ENCODE measurements at regions of chr1 and their contacts with region 1.

Region 1: DNA sequence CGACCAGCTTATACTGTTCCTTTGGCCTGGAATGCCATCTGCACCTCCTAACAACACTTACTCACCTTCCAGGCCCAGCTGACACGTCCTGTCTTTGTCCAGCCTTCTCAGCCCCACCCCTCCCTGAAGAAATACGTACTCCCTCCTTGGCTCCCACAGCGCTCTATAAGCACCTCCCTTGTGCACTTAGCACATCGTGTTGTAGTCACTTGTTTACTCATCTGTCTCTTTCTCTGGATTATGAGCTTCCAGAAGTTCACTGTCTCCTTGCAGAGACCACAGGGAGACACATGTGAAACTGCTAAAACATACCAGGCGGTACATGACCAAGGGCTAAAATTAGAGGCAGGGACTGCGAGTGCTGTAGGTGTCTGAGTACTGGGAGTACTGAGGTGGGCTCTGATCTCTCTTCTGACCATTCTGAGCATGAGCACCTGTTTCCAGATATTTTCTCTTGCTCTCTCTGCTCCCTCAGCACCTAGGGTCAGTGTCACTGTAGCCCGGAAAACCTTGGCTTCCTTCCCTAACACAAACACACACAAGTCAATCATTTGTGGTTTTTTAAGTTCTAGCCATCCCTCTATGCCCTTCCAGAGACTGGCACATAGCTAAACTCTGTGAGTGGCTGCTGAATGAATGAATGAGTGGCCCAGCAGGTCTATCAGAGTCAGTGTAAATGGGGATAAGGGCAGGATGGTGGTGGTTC is 5.1 kb downstream of the DCST1 start:
- DNase-seq: peak; percentile 97
- H3K4me3 Mint-ChIP-seq: peak overlapping the region; percentile 15
- H3K27ac Mint-ChIP-seq: peak overlapping the region; percentile 79
- H3K4me1 Mint-ChIP-seq: peaks cover 37% of the 10 kb centered on the region
- H3K27me3 Mint-ChIP-seq: no peaks in the 10 kb centered on the region
- CTCF ChIP-seq: no peak

Region 2: GRCh38 chr1:154955718-154956543 is 82.8 kb before region 1 on chr1 and contains the start of gene PBXIP1:
- CTCF ChIA-PET with region 1: interaction called, 12 read pairs
- POLR2A ChIA-PET with region 1: interaction called, 23 read pairs
- intact Hi-C with region 1: no loop called
- DNase-seq: peak; percentile 97
- H3K4me3 Mint-ChIP-seq: peak within 1 kb of the TSS; percentile 88
- H3K27ac Mint-ChIP-seq: peak within 1 kb of the TSS; percentile 68
- H3K4me1 Mint-ChIP-seq: peaks cover 43% of the 10 kb centered on the region
- H3K27me3 Mint-ChIP-seq: no peaks in the 10 kb centered on the region
- CTCF ChIP-seq: peak; percentile 24
- total RNA-seq, gene PBXIP1: 11.3 TPM in 2 replicates

Region 3: GRCh38 chr1:154982897-154983648 is 55.7 kb before region 1 on chr1 and contains the start of gene FLAD1:
- CTCF ChIA-PET with region 1: interaction called, 23 read pairs
- POLR2A ChIA-PET with region 1: interaction called, 22 read pairs
- intact Hi-C with region 1: no loop called
- DNase-seq: peak; percentile 100
- H3K4me3 Mint-ChIP-seq: no peak within 1 kb of the TSS
- H3K27ac Mint-ChIP-seq: no peak within 1 kb of the TSS
- H3K4me1 Mint-ChIP-seq: peaks cover 6% of the 10 kb centered on the region
- H3K27me3 Mint-ChIP-seq: no peaks in the 10 kb centered on the region
- CTCF ChIP-seq: no peak
- total RNA-seq, gene FLAD1: 65.4 and 91.1 TPM in 2 replicates

Region 4: GRCh38 chr1:155012026-155012546 is 26.7 kb before region 1 on chr1:
- CTCF ChIA-PET with region 1: interaction called, 390 read pairs
- POLR2A ChIA-PET with region 1: interaction called, 275 read pairs
- intact Hi-C with region 1: loop called (anchors 2 kb)
- DNase-seq: peak; percentile 95
- H3K4me3 Mint-ChIP-seq: peak overlapping the region; percentile 70
- H3K27ac Mint-ChIP-seq: peak overlapping the region; percentile 86
- H3K4me1 Mint-ChIP-seq: peaks cover 76% of the 10 kb centered on the region
- H3K27me3 Mint-ChIP-seq: no peaks in the 10 kb centered on the region
- CTCF ChIP-seq: no peak

Region 5: GRCh38 chr1:155022927-155023236 is 15.9 kb before region 1 on chr1:
- CTCF ChIA-PET with region 1: interaction called, 390 read pairs
- POLR2A ChIA-PET with region 1: interaction called, 275 read pairs
- intact Hi-C with region 1: no loop called
- DNase-seq: peak; percentile 85
- H3K4me3 Mint-ChIP-seq: peak overlapping the region; percentile 3
- H3K27ac Mint-ChIP-seq: peak overlapping the region; percentile 52
- H3K4me1 Mint-ChIP-seq: peaks cover 63% of the 10 kb centered on the region
- H3K27me3 Mint-ChIP-seq: no peaks in the 10 kb centered on the region
- CTCF ChIP-seq: no peak

Region 6: GRCh38 chr1:155135415-155136028 is 96.8 kb after region 1 on chr1 and contains the start of gene SLC50A1:
- CTCF ChIA-PET with region 1: no interaction called
- POLR2A ChIA-PET with region 1: interaction called, 12 read pairs
- intact Hi-C with region 1: no loop called
- DNase-seq: peak; percentile 94
- H3K4me3 Mint-ChIP-seq: peak within 1 kb of the TSS; percentile 80
- H3K27ac Mint-ChIP-seq: peak within 1 kb of the TSS; percentile 94
- H3K4me1 Mint-ChIP-seq: peaks cover 50% of the 10 kb centered on the region
- H3K27me3 Mint-ChIP-seq: no peaks in the 10 kb centered on the region
- CTCF ChIP-seq: no peak
- total RNA-seq, gene SLC50A1: 91.2 and 97.8 TPM in 2 replicates